ENCODE measurements at regions of chr10 and their contacts with region 1.

Region 1: GRCh38 chr10:132223156-132223590 is 36.4 kb downstream of the DPYSL4 start:
- DNase-seq: peak; percentile 11
- H3K4me3 ChIP-seq: no peak overlapping the region
- H3K27me3 ChIP-seq: no peaks in the 10 kb centered on the region
- CTCF ChIP-seq: peak; percentile 100

Region 2: DNA sequence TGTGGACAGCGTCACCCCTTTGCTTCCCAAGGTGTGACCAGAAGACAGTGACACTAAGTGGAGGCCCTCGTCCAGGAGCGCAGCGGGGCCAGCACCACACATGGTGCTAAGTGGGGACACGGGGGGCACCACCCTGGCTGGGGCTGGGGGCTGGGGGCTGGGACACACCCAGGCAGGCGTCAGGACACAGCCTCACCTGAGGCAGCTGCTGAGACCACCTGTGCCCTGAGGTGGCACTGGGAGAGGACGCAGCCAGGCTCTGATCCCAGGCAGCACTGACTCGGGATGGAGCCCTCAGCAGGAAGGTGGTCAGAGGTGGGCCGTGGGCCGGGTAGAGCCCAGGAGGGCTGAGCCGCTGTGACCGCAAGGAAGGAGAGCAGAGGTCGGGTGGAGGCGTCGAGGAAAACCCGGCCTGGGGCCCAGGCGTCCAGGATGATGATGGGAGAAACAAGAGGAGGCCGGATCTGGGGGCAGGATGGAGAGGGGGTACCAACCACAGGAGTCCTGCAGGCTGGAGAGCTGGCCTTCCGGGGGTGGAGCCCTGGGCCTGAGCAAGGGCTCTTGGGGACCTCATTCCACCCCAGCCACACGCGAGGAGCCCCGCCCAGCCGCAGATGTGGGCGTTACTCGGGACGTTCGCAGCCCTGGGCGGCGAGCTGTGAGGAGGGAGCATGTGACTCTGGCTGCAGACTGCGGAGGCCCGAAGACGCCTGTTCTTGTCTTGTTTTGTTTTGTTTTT is 131.4 kb after region 1 on chr10:
- CTCF ChIA-PET with region 1: interaction called, 23 read pairs
- POLR2A ChIA-PET with region 1: no interaction called
- DNase-seq: no peak
- H3K4me3 ChIP-seq: no peak overlapping the region
- H3K27me3 ChIP-seq: no peaks in the 10 kb centered on the region
- CTCF ChIP-seq: no peak

Measured in BJ (cell line).